GM10248 (cell line): ENCODE measurements at regions of chr6 and their contacts with region 1.

Region 1: DNA sequence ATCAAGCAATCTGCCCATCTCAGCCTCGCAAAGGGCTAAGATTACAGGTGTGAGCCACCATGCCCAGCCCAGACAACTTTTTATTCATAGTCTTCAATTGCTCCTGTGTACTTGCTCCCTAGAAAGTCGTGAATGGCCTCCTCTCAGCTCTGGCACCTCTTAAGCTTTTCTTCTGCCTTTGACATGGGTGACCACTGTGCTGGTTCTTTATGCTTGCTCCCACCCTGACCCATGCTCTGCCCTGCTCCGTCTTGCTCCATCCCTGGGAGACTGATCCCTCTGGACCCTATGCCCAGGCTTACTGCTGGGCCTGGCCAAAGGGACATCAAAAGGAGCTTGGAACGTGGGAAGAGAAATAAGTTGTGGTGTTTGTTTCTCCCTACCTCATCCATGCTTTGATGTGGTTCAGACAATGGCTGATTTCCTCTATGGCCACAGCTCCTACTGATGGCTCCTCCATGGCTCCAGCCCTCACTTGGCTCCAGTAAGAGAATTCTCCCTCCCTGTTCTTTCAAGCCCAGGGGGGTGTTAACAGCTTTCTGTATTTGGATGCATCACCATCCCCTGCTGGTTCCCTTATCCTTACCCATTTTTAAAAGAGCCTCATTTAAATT is 7.7 kb upstream of the TREM2 start:
- DNase-seq: no peak
- CTCF ChIP-seq: no peak

Region 2: DNA sequence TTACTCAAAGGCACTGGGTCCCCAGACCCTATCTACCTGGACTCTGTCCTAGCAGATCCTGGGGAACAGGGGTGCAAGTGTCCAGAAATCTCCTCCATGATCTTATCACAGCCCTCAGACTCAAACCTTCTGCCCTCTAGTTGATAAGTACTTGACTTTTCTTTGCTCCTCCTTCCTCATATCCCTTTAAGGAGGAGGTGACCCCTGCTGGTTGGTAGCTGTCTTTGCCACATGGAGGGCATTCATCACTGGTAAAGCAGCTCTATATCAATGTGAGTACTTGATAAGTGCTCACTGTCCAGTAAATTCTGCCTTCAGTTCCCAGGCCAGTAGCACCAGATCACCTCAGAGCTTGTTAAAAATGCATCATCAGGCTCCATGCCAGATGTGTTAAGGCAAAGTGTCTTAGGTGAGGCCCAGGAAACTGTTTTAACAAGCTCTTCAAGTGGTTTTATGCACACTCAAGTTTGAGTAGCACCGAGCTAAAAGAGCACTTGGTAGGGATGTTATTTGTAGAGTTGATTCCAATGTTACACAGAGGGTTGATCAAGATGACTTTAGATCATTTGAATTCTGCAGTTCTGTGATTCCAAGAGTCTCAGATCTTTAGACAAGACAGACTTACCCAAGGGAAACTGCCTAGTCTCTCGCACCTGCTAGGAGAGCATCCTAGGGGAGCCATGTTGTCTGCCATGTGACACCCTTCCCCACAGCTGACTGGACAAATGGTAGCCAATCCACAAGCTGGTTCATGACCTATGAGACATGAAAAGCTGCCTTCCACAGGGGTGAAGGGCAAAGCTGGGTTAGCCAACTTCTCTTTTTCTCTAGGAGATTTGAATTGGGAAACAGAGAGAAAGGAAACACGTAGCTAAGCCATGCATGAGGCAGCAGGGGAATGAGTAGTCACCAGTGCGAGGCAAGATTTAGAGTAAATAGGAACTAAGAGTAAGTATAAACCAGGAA is 11.7 kb after region 1 on chr6:
- CTCF ChIA-PET with region 1: interaction called, 25 read pairs
- POLR2A ChIA-PET with region 1: no interaction called
- DNase-seq: peak; percentile 55
- CTCF ChIP-seq: peak; percentile 45